Activated naive CD4-positive, alpha-beta T cell treated with anti-CD3 and anti-CD28 coated beads for 36 hours (primary cell): ENCODE measurements at regions of chr5 and their contacts with region 1.

Region 1: DNA sequence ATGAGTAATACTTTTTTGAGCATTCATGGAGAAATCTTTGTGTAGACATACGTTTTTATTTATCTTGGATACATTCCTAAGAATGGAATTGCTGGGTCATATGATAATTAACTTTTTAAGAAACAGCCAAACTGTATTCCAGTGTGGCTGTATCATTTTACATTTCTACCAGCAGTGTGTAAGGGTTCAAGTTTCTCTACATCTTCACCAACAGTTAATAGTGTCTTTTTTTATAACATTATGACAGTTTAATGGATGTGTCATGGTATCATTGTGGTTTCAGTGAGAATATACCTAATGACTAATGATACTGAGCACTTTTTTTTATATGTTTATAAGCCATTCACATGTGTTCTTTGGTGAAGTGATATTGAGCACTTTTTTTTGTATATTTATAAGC is 52.4 kb downstream of the NIPBL start:
- DNase-seq: no peak
- H3K4me3 Mint-ChIP-seq: no peak overlapping the region
- H3K27ac Mint-ChIP-seq: no peak overlapping the region
- H3K4me1 Mint-ChIP-seq: peaks cover 55% of the 10 kb centered on the region
- H3K27me3 Mint-ChIP-seq: no peaks in the 10 kb centered on the region

Region 2: DNA sequence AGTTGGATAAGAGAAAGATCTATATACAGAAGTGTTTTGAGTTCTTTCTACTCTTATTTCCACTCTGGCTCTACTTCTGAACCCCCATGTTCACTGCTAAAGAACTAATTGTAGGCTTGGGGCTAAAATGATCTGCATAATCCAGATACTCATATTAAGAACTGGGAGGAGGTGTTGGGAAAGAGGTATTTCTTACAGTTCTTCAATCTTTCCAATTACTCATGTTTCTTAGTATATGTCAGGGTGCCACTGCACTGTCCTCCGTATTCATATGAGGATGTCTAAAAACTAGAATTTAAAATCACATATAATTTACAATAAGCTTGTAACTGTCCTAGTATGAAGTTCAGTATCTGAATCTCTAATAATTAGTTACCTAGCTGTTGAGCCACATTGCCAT is 39.7 kb before region 1 on chr5:
- CTCF ChIA-PET with region 1: no interaction called
- intact Hi-C with region 1: loop called (anchors 2 kb)
- DNase-seq: peak; percentile 21
- H3K4me3 Mint-ChIP-seq: no peak overlapping the region
- H3K27ac Mint-ChIP-seq: no peak overlapping the region
- H3K4me1 Mint-ChIP-seq: peaks cover 65% of the 10 kb centered on the region
- H3K27me3 Mint-ChIP-seq: no peaks in the 10 kb centered on the region

Region 3: GRCh38 chr5:36908544-36909260 is 20.2 kb before region 1 on chr5:
- CTCF ChIA-PET with region 1: no interaction called
- intact Hi-C with region 1: loop called (anchors 2 kb)
- DNase-seq: no peak
- H3K4me3 Mint-ChIP-seq: no peak overlapping the region
- H3K27ac Mint-ChIP-seq: no peak overlapping the region
- H3K4me1 Mint-ChIP-seq: peaks cover 40% of the 10 kb centered on the region
- H3K27me3 Mint-ChIP-seq: no peaks in the 10 kb centered on the region

Region 4: DNA sequence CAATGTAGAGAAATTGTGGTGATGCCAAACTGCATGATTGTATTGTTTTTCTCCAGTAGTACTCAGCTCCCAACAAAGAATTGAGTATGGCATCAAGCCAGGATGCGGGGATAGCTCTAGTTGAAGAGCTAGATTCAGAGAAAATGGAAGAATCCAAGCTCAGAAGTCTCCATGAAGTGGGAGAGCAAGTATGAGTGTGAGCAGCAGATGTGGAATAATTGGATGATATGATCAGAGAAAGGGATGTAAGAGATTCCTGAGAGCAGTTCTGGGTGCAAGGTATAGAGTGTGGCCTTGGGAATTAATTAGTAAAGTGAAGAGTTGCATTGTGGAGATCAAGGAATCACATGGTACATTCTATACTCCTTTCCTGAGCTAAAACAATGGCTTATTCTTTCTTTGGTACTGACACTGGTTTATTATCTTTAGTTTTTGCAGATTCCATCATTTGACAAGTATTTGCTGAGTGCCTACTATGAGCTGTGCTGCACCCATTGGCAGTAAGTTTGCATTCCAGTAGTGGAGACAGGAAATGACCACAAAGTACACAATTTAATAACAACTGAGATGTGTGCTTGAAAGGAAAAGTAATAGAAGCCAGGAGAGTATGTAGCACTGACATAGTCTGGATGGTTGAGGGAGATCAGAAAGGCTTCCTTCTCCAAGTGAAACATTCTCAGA is 143.1 kb after region 1 on chr5:
- CTCF ChIA-PET with region 1: no interaction called
- intact Hi-C with region 1: no loop called
- DNase-seq: no peak
- H3K4me3 Mint-ChIP-seq: no peak overlapping the region
- H3K27ac Mint-ChIP-seq: no peak overlapping the region
- H3K4me1 Mint-ChIP-seq: no peaks in the 10 kb centered on the region
- H3K27me3 Mint-ChIP-seq: no peaks in the 10 kb centered on the region

Region 5: GRCh38 chr5:37184748-37185364 is 255.9 kb after region 1 on chr5:
- CTCF ChIA-PET with region 1: no interaction called
- intact Hi-C with region 1: no loop called
- DNase-seq: no peak
- H3K4me3 Mint-ChIP-seq: no peak overlapping the region
- H3K27ac Mint-ChIP-seq: no peak overlapping the region
- H3K4me1 Mint-ChIP-seq: no peaks in the 10 kb centered on the region
- H3K27me3 Mint-ChIP-seq: no peaks in the 10 kb centered on the region

Region 6: GRCh38 chr5:37637165-37637845 is 708.4 kb after region 1 on chr5:
- CTCF ChIA-PET with region 1: no interaction called
- intact Hi-C with region 1: no loop called
- DNase-seq: no peak
- H3K4me3 Mint-ChIP-seq: no peak overlapping the region
- H3K27ac Mint-ChIP-seq: no peak overlapping the region
- H3K4me1 Mint-ChIP-seq: no peaks in the 10 kb centered on the region
- H3K27me3 Mint-ChIP-seq: no peaks in the 10 kb centered on the region